ENCODE measurements at regions of chr20 and their contacts with region 1.

Region 1: DNA sequence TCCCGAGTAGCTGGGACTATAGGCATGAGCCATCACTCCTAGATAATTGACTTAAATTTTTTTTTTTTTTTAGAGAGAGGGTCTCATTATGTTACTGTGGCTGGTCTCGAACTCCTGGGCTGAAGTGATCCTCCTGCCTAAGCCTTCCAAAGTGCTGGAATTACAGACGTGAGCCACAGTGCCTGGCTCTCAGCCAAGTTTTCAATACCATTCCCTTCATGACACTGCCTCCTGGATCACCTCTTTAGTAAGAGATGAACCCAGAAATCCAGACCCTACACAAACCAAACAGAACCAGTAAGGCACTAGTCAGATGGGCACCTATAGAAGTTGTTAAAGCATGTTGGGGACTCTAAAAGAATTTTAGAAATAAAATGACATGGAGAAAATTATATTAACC is 18.3 kb upstream of the RIMS4 start:
- DNase-seq: no peak
- ATAC-seq: no peak
- H3K4me3 ChIP-seq: no peak overlapping the region
- H3K27ac ChIP-seq: no peak overlapping the region
- H3K4me1 ChIP-seq: no peaks in the 10 kb centered on the region
- CTCF ChIP-seq: no peak
- EP300 ChIP-seq: no peak
- POLR2A ChIP-seq: no peak
- RAD21 ChIP-seq: no peak

Region 2: GRCh38 chr20:44817143-44817910 is 11.3 kb before region 1 on chr20:
- CTCF ChIA-PET with region 1: interaction called, 4 read pairs
- POLR2A ChIA-PET with region 1: interaction called, 11 read pairs
- DNase-seq: no peak
- ATAC-seq: no peak
- H3K4me3 ChIP-seq: no peak overlapping the region
- H3K27ac ChIP-seq: peak overlapping the region in 1 of 2 experiments; percentile 61; a peak in 3 of 6 replicates
- H3K4me1 ChIP-seq: no peaks in the 10 kb centered on the region
- CTCF ChIP-seq: no peak
- EP300 ChIP-seq: no peak
- POLR2A ChIP-seq: no peak
- RAD21 ChIP-seq: no peak